ENCODE measurements at regions of chr17 and their contacts with region 1.

Region 1: DNA sequence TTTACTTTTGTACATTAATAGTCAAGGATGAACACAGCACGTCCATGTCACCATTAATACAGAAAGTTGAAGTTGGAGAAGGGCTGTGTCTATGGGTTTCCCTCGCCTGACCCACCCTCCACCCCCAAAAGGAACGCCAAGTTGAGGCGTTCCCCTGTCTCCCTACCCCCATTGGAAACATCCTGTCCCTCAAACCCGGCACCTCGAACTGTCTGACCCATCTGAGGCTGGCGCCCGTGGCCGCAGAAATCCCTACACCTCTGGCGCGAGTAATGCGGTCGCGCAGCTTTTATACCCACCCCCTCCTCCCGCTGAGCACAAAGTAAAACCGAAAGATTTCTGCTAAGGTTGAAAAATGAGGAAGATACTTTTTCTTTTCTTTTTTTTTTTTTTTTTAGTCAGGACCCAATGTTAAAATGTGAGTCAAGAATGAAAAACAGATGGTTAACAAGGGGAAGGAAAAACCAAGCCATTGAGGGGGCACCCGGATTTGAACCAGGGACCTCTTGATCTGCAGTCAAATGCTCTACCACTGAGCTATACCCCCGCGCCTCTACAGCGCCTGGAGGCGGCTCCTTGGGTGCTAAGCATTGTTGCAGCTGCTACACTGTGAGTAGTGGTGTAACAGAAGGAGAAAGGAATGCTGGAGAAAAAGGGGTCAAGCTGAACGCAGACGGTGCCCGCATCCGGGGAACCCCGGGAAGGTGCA is 887 bp upstream of the LASP1 start:
- DNase-seq: peak; percentile 78
- H3K4me3 Mint-ChIP-seq: peak overlapping the region; percentile 91
- H3K27ac Mint-ChIP-seq: peak overlapping the region; percentile 96
- H3K4me1 Mint-ChIP-seq: peaks cover 52% of the 10 kb centered on the region
- H3K27me3 Mint-ChIP-seq: no peaks in the 10 kb centered on the region

Region 2: DNA sequence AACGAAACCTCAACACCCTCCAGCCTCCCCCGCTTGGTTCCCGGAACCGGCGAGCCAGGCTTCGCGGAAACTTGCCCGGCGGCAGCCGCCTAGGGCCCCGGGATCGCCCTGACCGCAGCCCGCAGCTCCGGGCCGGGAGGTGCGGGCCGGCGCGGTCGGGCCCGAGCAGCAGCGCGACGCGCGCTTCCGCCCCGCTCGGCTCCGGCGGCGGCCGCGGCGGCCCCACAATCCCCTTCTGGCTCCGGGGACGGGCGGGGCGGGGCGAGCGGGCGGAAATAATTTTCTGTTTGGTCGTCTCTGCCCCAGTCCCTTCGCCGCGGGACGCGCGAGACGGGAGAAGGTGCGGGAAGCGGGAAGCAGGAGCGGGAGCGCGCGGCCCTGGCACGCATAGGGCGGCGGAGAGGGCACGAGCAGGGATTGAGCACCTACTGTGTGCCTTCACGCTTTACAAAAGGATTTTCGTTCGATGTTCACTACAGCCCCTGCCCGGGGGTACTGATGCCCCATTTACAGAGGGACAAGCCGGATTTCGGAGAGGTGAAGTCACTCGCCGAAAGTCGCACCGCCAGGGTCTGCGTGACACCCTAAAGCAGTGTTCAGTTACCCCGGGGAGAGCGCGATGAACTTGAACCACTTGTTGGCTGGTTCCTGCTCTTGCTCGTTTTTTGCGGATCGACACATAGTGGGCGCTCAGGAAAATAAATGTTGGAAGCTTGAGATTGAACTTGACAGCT is 166.6 kb before region 1 on chr17:
- intact Hi-C with region 1: loop called (anchors 1 kb)
- DNase-seq: peak; percentile 75
- H3K4me3 Mint-ChIP-seq: peak overlapping the region; percentile 97
- H3K27ac Mint-ChIP-seq: peak overlapping the region; percentile 99
- H3K4me1 Mint-ChIP-seq: peaks cover 65% of the 10 kb centered on the region
- H3K27me3 Mint-ChIP-seq: no peaks in the 10 kb centered on the region

Region 3: DNA sequence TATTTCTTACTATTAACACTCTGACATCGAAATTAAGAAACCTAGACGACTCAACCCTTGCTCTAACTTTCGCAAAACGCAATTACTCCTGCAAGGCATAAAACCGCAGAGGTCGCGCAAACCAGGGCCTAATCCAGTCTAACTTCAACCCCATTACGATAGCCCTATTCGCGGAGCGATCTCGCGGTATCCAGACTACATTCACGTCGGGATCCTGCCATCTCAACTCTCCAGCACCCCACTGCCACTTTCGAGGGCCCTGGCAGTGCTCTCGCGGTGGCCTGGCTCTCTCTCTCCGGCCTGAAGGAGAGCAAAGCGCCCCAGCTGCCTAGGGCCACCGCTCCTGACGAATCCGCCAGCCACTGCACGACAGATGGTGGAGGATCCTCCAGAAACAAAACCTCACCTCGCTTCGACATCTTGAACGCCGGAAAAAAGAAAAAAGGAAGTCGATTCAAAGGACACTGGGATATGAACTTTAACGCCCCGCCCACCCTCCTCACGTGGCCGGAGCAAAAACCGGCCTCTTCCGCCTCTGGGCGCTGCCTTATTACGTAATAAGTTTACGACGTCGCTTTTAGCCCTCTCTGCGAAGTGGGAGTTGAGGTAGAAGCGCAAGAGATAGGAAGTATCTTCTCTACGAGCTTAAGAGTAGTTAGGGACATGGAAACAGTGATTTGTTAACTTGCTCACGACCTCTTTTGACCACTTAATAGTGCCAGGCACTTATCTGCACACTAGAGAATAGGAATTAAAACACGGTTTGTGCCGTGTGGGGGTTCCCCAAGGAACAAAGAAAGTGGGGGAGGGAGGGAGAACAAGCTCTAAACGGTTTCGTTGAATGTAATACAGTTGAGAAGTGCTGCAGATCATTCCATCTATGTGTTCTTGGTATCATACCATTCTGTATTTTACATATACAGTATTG is 15.4 kb before region 1 on chr17 and contains the start of gene RPL23:
- intact Hi-C with region 1: loop called (anchors 1 kb)
- DNase-seq: peak; percentile 90
- H3K4me3 Mint-ChIP-seq: peak within 1 kb of the TSS; percentile 99
- H3K27ac Mint-ChIP-seq: peak within 1 kb of the TSS; percentile 97
- H3K4me1 Mint-ChIP-seq: peaks cover 44% of the 10 kb centered on the region
- H3K27me3 Mint-ChIP-seq: no peaks in the 10 kb centered on the region
- total RNA-seq, gene RPL23: 1,847 and 1,871 TPM in 2 replicates

Region 4: GRCh38 chr17:38898812-38899348 is 29.9 kb after region 1 on chr17:
- intact Hi-C with region 1: loop called (anchors 1 kb)
- DNase-seq: peak; percentile 75
- H3K4me3 Mint-ChIP-seq: peak overlapping the region; percentile 74
- H3K27ac Mint-ChIP-seq: peak overlapping the region; percentile 94
- H3K4me1 Mint-ChIP-seq: peaks cover 58% of the 10 kb centered on the region
- H3K27me3 Mint-ChIP-seq: no peaks in the 10 kb centered on the region

Region 5: GRCh38 chr17:38943607-38944006 is 74.6 kb after region 1 on chr17:
- intact Hi-C with region 1: loop called (anchors 5 kb)
- DNase-seq: no peak
- H3K4me3 Mint-ChIP-seq: no peak overlapping the region
- H3K27ac Mint-ChIP-seq: no peak overlapping the region
- H3K4me1 Mint-ChIP-seq: peaks cover 6% of the 10 kb centered on the region
- H3K27me3 Mint-ChIP-seq: peaks cover 3% of the 10 kb centered on the region

Region 6: GRCh38 chr17:39401412-39402243 is 532.7 kb after region 1 on chr17 and contains the start of gene FBXL20:
- intact Hi-C with region 1: loop called (anchors 10 kb)
- DNase-seq: peak; percentile 84
- H3K4me3 Mint-ChIP-seq: peak within 1 kb of the TSS; percentile 94
- H3K27ac Mint-ChIP-seq: peak within 1 kb of the TSS; percentile 98
- H3K4me1 Mint-ChIP-seq: peaks cover 40% of the 10 kb centered on the region
- H3K27me3 Mint-ChIP-seq: no peaks in the 10 kb centered on the region
- total RNA-seq, gene FBXL20: 20.1 and 25.6 TPM in 2 replicates

Measured in activated T-helper 1 cell treated with anti-CD3 and anti-CD28 coated beads, Interleukin-12 subunit alpha, Interleukin-12 subunit beta, Interleukin-2, Interleukin-4 antibody, amounts not matched to agents 30 ng/mL and 10 ng/mL and 1 ng/mL, durations not matched to agents 14 hours and 24 hours and 36 hours (primary cell).